ENCODE measurements at regions of chr2 and their contacts with region 1.

Region 1: DNA sequence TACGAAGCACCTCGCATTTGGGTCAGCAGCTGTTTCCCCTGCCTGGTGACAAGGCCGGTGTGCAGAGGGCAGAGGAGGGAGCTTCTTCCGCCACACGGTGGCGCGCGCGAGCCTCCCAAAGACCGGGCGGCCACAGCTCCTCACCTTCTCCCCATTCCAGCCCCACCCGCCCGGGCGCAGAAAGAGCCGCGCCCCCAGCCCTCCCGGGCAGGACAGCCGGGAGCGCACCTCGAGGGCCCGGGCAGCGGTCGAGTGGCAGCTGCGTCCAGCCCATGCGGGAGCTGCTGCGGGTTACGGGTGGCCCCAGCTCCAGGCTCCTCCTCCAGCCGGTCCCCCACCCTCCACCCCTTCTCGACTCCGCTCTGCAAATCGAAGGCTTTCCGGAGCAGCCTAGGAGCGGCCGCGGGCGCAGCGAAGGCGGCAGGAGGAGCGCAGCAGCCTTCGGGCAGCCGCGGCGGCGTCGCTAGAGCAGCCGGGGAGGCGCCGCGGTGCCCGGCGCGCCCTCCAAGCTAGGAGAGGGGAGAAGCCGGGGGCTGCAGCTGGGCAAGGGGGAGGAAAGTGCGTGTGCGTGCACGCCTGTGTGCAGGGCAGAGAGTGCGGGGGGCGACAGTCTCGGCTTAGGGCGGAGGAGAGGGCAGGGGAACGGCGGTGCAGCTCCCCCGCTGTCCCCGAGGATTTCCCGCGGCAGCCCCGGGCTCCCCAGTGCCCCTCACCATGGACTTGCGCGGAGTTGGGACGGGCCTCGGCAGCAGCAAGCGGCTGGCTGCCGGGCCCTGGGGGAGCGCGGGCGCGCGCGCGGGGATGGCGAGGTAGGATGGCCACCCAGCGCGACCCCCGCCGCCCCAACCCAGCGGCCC is at the start of gene CCDC85A:
- DNase-seq: peak; percentile 83 to 96
- ATAC-seq: peak; percentile 95
- H3K4me3 ChIP-seq: peak within 1 kb of the TSS; percentile 15 to 56
- H3K27ac ChIP-seq: no peak within 1 kb of the TSS
- H3K4me1 ChIP-seq: no peaks in the 10 kb centered on the region
- H3K27me3 ChIP-seq: no peaks in the 10 kb centered on the region
- total RNA-seq, gene CCDC85A: 2.7 to 5.6 TPM

Region 2: DNA sequence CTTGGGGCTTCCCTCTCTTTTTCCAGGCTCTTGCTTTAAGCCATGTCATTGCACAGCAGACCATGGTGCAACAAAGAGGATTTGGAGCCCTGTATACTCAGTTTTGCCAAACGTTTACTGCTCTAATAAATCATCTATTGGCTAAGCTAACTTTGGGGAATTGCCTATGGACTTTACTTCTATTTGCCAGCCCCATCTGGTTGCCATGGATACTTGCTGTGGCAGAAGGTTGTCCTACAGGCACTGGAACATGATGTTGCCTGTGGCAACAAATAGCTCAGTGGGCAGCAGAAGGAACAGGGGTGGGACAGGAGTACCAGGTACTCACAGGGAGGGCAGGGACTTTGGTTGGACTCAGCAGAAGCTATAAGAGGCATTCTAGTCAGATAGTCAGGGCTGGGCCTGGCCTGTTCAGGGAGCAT is 129.6 kb after region 1 on chr2:
- intact Hi-C with region 1: no loop called
- DNase-seq: no peak
- ATAC-seq: no peak
- H3K4me3 ChIP-seq: no peak overlapping the region
- H3K27ac ChIP-seq: no peak overlapping the region
- H3K4me1 ChIP-seq: no peaks in the 10 kb centered on the region
- H3K27me3 ChIP-seq: no peaks in the 10 kb centered on the region

Region 3: GRCh38 chr2:56390644-56391043 is 206.8 kb after region 1 on chr2:
- intact Hi-C with region 1: no loop called
- DNase-seq: no peak
- ATAC-seq: no peak
- H3K4me3 ChIP-seq: no peak overlapping the region
- H3K27ac ChIP-seq: no peak overlapping the region
- H3K4me1 ChIP-seq: no peaks in the 10 kb centered on the region
- H3K27me3 ChIP-seq: no peaks in the 10 kb centered on the region

Region 4: GRCh38 chr2:56749152-56749752 is 565.4 kb after region 1 on chr2:
- intact Hi-C with region 1: loop called (anchors 2 kb)
- DNase-seq: no peak
- ATAC-seq: no peak
- H3K4me3 ChIP-seq: no peak overlapping the region
- H3K27ac ChIP-seq: no peak overlapping the region
- H3K4me1 ChIP-seq: no peaks in the 10 kb centered on the region
- H3K27me3 ChIP-seq: no peaks in the 10 kb centered on the region

Region 5: GRCh38 chr2:57516698-57517340 is 1332.9 kb after region 1 on chr2:
- intact Hi-C with region 1: loop called in 1 of 2 experiments (anchors 10 kb)
- DNase-seq: no peak
- ATAC-seq: no peak
- H3K4me3 ChIP-seq: no peak overlapping the region
- H3K27ac ChIP-seq: no peak overlapping the region
- H3K4me1 ChIP-seq: no peaks in the 10 kb centered on the region
- H3K27me3 ChIP-seq: no peaks in the 10 kb centered on the region